AG04450 (cell line): ENCODE measurements at regions of chr13 and their contacts with region 1.

Region 1: GRCh38 chr13:31909864-31910551 is 121.6 kb upstream of the FRY start:
- DNase-seq: peak; percentile 42
- H3K4me3 ChIP-seq: no peak overlapping the region
- H3K27ac ChIP-seq: no peak overlapping the region
- H3K27me3 ChIP-seq: peaks cover 8% of the 10 kb centered on the region
- CTCF ChIP-seq: peak; percentile 85

Region 2: DNA sequence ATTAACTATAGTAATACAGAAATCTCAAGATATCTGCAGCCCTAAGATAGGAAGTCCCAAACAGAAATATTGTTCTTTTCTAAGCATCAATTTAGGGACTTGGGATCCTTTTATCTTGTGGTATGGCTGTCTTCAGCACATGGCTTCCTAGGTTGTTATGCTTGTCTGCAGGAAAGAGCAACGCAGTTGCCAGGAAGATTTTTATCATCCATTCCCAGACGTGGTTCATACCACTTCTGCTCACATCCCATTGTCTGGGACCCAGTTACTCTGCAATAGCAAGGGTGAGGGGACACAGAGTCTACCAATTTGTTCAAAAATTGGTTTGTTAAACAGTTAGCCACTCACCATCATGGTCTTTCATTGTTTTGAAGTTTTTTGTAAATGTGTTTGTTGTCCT is 256.3 kb before region 1 on chr13:
- CTCF ChIA-PET with region 1: no interaction called
- POLR2A ChIA-PET with region 1: no interaction called
- DNase-seq: no peak
- H3K4me3 ChIP-seq: no peak overlapping the region
- H3K27ac ChIP-seq: no peak overlapping the region
- H3K27me3 ChIP-seq: no peaks in the 10 kb centered on the region
- CTCF ChIP-seq: no peak

Region 3: DNA sequence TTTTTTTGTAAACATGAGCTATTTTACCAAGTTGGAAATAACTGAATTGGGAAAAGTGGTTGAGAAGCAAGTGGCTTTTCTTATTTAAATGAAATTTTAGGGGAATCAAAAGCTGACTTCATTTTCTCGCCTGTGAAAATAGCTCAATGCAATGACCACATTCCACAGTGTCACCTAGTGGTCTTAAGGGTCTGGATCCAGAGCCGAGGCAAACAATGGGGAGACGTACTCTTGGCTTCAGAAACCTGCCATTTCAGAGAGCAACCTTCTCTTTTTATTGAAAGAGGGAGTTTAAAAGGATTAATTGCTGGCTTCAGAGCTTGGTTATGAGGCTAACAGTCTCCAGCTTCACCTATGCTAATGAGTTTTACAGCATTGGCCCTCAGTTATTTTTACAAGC is 210.4 kb before region 1 on chr13:
- CTCF ChIA-PET with region 1: no interaction called
- POLR2A ChIA-PET with region 1: no interaction called
- DNase-seq: no peak
- H3K4me3 ChIP-seq: no peak overlapping the region
- H3K27ac ChIP-seq: no peak overlapping the region
- H3K27me3 ChIP-seq: peaks cover 7% of the 10 kb centered on the region
- CTCF ChIP-seq: peak; percentile 26

Region 4: DNA sequence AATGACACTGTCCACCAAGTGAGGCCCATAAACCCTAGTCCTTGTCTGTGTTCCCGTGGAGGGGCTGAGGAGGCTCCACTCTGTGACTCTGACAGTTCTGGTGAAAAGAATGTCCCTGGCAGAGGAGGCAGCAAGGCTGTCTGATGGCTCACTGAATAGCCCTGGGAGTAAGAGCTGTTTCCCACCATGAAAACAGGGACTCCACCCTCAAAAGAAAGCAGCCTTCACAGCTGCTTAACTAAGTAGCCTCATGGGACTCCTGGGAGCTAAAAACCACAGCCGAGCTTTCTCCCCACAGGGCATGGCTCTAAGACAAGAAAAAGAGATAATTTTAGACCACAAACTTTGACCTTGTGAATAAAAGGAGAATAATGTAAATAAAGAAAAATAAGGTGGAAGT is 13.6 kb before region 1 on chr13:
- CTCF ChIA-PET with region 1: interaction called, 16 read pairs
- POLR2A ChIA-PET with region 1: no interaction called
- DNase-seq: no peak
- H3K4me3 ChIP-seq: no peak overlapping the region
- H3K27ac ChIP-seq: no peak overlapping the region
- H3K27me3 ChIP-seq: no peaks in the 10 kb centered on the region
- CTCF ChIP-seq: no peak

Region 5: DNA sequence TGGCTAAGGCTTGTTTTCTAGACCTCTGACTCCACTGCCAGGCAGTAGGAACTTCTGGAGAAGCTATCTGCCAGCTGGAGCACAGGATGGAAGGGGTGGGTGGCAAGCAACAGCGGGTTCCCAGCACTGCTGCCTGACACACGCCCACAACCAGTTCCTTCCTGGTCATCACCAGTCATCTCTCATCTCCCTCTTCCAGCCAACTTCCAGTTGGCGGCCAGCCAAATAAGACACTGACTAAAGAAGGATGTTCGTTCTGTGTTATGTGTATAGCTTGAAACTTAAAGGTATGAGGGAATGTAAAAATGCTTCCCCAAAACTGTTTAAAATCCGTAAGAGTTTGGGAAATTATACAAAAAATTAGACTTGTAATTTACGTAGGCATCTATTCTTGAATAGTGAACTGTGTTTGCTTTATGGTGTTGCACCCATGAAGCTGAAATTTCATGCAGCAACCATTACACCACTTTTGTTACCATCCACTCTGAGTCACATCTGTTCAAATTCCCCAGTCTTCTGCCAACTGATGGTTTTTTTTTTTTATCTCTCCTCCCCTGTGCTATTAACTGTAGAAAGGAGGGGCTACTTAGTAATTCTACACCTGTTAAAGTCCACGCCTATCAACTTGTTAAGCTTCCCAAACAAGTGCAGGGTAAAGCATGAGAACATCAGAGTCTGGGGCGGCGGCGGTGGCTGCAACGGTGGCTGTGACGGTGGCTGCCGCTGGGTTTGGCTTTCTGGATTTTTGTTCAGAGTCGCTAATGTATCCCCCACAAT is 35.4 kb after region 1 on chr13:
- CTCF ChIA-PET with region 1: interaction called, 17 read pairs
- POLR2A ChIA-PET with region 1: no interaction called
- DNase-seq: no peak
- H3K4me3 ChIP-seq: peak overlapping the region; percentile 18
- H3K27ac ChIP-seq: peak overlapping the region; percentile 58
- H3K27me3 ChIP-seq: no peaks in the 10 kb centered on the region
- CTCF ChIP-seq: no peak

Region 6: GRCh38 chr13:31987535-31988170 is 77.6 kb after region 1 on chr13:
- CTCF ChIA-PET with region 1: interaction called, 15 read pairs
- POLR2A ChIA-PET with region 1: no interaction called
- DNase-seq: no peak
- H3K4me3 ChIP-seq: no peak overlapping the region
- H3K27ac ChIP-seq: no peak overlapping the region
- H3K27me3 ChIP-seq: peaks cover 8% of the 10 kb centered on the region
- CTCF ChIP-seq: no peak

Region 7: GRCh38 chr13:32164622-32165268 is 254.7 kb after region 1 on chr13:
- CTCF ChIA-PET with region 1: interaction called, 28 read pairs
- POLR2A ChIA-PET with region 1: no interaction called
- DNase-seq: peak; percentile 20
- H3K4me3 ChIP-seq: no peak overlapping the region
- H3K27ac ChIP-seq: no peak overlapping the region
- H3K27me3 ChIP-seq: no peaks in the 10 kb centered on the region
- CTCF ChIP-seq: peak; percentile 73

Region 8: DNA sequence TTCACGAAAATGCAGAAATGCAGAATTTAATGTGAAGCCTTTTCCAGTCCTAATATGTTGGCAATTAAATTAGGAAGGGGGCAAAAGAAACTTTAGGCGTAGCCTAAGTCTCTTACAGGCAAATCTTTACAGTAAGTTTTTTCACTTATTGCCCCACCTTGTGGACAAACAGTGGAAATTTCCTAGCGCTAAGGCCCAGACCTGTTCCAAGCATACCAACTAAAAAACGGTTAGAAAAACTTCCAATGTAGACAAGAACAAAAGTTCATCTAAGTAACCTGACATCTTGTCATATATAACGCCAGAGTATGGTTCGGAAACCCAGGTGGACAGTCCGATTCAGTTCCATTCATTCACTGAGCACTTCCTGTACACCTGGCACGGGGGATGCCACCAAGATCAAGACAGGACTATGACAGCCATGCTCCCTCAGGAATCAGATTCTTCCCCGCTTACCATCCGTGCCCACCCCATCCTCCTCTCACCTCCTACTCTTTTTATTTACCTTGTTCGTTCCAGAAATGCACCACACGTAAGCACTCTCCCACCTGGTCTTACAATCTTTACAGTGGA is 400.2 kb after region 1 on chr13:
- CTCF ChIA-PET with region 1: interaction called, 18 read pairs
- POLR2A ChIA-PET with region 1: no interaction called
- DNase-seq: peak; percentile 41
- H3K4me3 ChIP-seq: no peak overlapping the region
- H3K27ac ChIP-seq: no peak overlapping the region
- H3K27me3 ChIP-seq: no peaks in the 10 kb centered on the region
- CTCF ChIP-seq: peak; percentile 71